ENCODE measurements at regions of chr11 and their contacts with region 1.

Region 1: GRCh38 chr11:8328848-8329330 is 65.2 kb upstream of the LMO1 start:
- DNase-seq: peak; percentile 87
- CTCF ChIP-seq: peak; percentile 85

Region 2: DNA sequence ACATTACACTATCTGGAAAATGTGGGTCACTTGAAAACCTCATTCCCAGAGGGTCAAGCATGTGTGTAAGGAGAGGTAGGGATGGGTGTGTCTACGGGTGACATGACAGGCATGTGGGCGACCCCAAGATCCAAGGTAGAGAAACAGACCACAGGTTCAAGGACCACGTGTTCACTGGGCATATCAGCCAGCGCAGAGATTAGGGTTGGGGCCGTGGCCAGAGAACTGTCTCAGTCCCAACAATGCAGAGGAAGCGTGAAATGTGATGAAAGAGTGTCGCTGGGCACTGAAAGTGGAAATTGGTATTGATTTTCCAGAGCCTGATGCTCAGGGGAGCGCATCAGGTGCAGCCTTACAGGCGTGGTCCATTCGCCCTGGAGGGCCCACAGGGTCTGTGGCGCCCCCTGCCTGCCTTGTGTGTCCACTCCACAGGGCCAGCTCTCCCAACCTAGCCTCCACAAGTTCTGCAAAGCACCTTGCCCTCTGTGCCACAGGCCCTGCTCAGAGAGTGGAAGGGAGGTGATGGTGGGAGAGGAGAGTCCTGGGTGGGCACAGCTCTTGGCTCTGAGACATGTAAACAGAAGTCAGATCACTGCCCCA is 10.5 kb before region 1 on chr11:
- CTCF ChIA-PET with region 1: interaction called, 15 read pairs
- POLR2A ChIA-PET with region 1: no interaction called
- DNase-seq: no peak
- CTCF ChIP-seq: peak; percentile 10